GM12878 (cell line): ENCODE measurements at regions of chr4 and their contacts with region 1.

Region 1: GRCh38 chr4:38730830-38731646 is 51.8 kb downstream of the TLR10 start:
- DNase-seq: peak; percentile 87
- ATAC-seq: peak; percentile 97
- H3K4me3 ChIP-seq: no peak overlapping the region
- H3K27ac ChIP-seq: peak overlapping the region; percentile 57
- H3K4me1 ChIP-seq: peaks cover 16% of the 10 kb centered on the region
- H3K27me3 ChIP-seq: no peaks in the 10 kb centered on the region; a peak in 1 of 4 replicates
- CTCF ChIP-seq: peak; percentile 69 to 96 (median 89)
- EP300 ChIP-seq: peak; percentile 75 to 91; a peak in 3 of 4 replicates
- POLR2A ChIP-seq: no peak
- RAD21 ChIP-seq: peak; percentile 97

Region 2: GRCh38 chr4:38237139-38237538 is 493.9 kb before region 1 on chr4:
- CTCF ChIA-PET with region 1: no interaction called
- POLR2A ChIA-PET with region 1: no interaction called
- RAD21 ChIA-PET with region 1: no interaction called
- SMC1A ChIA-PET with region 1: no interaction called
- in situ Hi-C with region 1: no loop called
- intact Hi-C with region 1: no loop called
- DNase-seq: no peak
- ATAC-seq: no peak
- H3K4me3 ChIP-seq: no peak overlapping the region
- H3K27ac ChIP-seq: no peak overlapping the region
- H3K4me1 ChIP-seq: no peaks in the 10 kb centered on the region
- H3K27me3 ChIP-seq: no peaks in the 10 kb centered on the region; a peak in 1 of 4 replicates
- CTCF ChIP-seq: no peak
- EP300 ChIP-seq: no peak
- POLR2A ChIP-seq: no peak
- RAD21 ChIP-seq: no peak

Region 3: GRCh38 chr4:38347251-38347650 is 383.8 kb before region 1 on chr4:
- CTCF ChIA-PET with region 1: no interaction called
- POLR2A ChIA-PET with region 1: no interaction called
- RAD21 ChIA-PET with region 1: no interaction called
- SMC1A ChIA-PET with region 1: no interaction called
- in situ Hi-C with region 1: no loop called
- intact Hi-C with region 1: no loop called
- DNase-seq: no peak
- ATAC-seq: no peak
- H3K4me3 ChIP-seq: no peak overlapping the region
- H3K27ac ChIP-seq: no peak overlapping the region
- H3K4me1 ChIP-seq: no peaks in the 10 kb centered on the region
- H3K27me3 ChIP-seq: no peaks in the 10 kb centered on the region
- CTCF ChIP-seq: no peak
- EP300 ChIP-seq: no peak
- POLR2A ChIP-seq: no peak
- RAD21 ChIP-seq: no peak

Region 4: DNA sequence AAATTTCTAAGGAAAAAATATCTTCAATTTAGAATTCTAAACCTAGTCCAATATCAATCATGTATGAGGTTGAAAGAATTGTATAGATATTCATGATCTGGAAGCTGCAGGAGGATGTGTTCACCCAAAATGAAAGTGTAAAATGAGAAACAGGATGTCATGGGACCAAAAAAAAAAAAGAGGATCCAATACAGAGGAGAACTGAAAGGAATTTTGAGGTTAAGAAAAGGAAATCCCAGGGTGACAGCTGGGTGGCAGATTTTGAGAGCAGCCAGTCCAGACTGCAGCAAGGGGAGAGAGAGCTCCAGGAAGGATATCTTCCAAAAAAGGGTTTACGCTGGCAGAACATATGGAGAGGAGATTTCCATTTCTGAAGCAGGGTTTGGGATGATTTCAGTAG is 12.8 kb after region 1 on chr4:
- CTCF ChIA-PET with region 1: interaction called, 23 read pairs
- POLR2A ChIA-PET with region 1: interaction called, 7 read pairs
- RAD21 ChIA-PET with region 1: interaction called, 3 read pairs
- SMC1A ChIA-PET with region 1: interaction called, 18 read pairs
- in situ Hi-C with region 1: no loop called
- intact Hi-C with region 1: no loop called
- DNase-seq: no peak
- ATAC-seq: peak; percentile 55
- H3K4me3 ChIP-seq: peak overlapping the region; percentile 15; the same call in 1 of the 2 replicates
- H3K27ac ChIP-seq: no peak overlapping the region
- H3K4me1 ChIP-seq: peaks cover 6% of the 10 kb centered on the region; the same call in 1 of the 2 replicates
- H3K27me3 ChIP-seq: no peaks in the 10 kb centered on the region
- CTCF ChIP-seq: no peak
- EP300 ChIP-seq: no peak
- POLR2A ChIP-seq: no peak
- RAD21 ChIP-seq: no peak